ENCODE measurements at regions of chr2 and their contacts with region 1.

Region 1: DNA sequence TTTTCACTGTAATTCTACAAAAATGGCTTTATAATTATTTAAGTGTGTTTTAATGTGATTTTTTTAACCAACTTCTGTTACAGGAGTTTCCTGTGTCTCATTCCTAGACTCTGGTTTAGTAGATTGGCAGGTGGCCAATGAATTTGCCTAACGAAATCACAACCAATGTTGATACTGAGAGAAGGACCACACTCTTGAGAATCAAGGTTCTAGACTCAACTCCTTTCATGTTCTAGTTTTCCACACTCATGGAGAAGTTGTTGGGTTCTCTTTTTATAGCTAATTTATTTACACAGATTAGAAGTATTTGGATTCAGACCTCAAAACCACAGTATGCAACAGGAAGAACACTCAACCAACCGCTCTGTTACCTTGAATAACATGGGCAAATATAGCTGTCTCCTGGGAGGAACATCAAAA is 22.6 kb upstream of the USP34 start:
- DNase-seq: no peak
- H3K4me3 ChIP-seq: no peak overlapping the region
- H3K27ac ChIP-seq: no peak overlapping the region
- H3K4me1 ChIP-seq: no peaks in the 10 kb centered on the region
- H3K27me3 ChIP-seq: no peaks in the 10 kb centered on the region
- CTCF ChIP-seq: no peak
- EP300 ChIP-seq: no peak
- POLR2A ChIP-seq: no peak
- RAD21 ChIP-seq: no peak

Region 2: GRCh38 chr2:61478086-61478485 is 15.4 kb before region 1 on chr2:
- CTCF ChIA-PET with region 1: no interaction called
- POLR2A ChIA-PET with region 1: interaction called, 10 read pairs
- DNase-seq: no peak
- H3K4me3 ChIP-seq: no peak overlapping the region
- H3K27ac ChIP-seq: no peak overlapping the region
- H3K4me1 ChIP-seq: no peaks in the 10 kb centered on the region
- H3K27me3 ChIP-seq: no peaks in the 10 kb centered on the region
- CTCF ChIP-seq: no peak
- EP300 ChIP-seq: no peak
- POLR2A ChIP-seq: no peak
- RAD21 ChIP-seq: no peak

Region 3: GRCh38 chr2:61549546-61549945 is 56.0 kb after region 1 on chr2:
- CTCF ChIA-PET with region 1: no interaction called
- POLR2A ChIA-PET with region 1: no interaction called
- DNase-seq: no peak
- H3K4me3 ChIP-seq: no peak overlapping the region
- H3K27ac ChIP-seq: no peak overlapping the region; the same call in 1 of the 2 replicates
- H3K4me1 ChIP-seq: peaks cover 0 to 12% (median 6%) of the 10 kb centered on the region in 4 experiments; a peak in 4 of 7 replicates
- H3K27me3 ChIP-seq: no peaks in the 10 kb centered on the region
- CTCF ChIP-seq: no peak
- EP300 ChIP-seq: no peak
- POLR2A ChIP-seq: no peak
- RAD21 ChIP-seq: no peak

Region 4: DNA sequence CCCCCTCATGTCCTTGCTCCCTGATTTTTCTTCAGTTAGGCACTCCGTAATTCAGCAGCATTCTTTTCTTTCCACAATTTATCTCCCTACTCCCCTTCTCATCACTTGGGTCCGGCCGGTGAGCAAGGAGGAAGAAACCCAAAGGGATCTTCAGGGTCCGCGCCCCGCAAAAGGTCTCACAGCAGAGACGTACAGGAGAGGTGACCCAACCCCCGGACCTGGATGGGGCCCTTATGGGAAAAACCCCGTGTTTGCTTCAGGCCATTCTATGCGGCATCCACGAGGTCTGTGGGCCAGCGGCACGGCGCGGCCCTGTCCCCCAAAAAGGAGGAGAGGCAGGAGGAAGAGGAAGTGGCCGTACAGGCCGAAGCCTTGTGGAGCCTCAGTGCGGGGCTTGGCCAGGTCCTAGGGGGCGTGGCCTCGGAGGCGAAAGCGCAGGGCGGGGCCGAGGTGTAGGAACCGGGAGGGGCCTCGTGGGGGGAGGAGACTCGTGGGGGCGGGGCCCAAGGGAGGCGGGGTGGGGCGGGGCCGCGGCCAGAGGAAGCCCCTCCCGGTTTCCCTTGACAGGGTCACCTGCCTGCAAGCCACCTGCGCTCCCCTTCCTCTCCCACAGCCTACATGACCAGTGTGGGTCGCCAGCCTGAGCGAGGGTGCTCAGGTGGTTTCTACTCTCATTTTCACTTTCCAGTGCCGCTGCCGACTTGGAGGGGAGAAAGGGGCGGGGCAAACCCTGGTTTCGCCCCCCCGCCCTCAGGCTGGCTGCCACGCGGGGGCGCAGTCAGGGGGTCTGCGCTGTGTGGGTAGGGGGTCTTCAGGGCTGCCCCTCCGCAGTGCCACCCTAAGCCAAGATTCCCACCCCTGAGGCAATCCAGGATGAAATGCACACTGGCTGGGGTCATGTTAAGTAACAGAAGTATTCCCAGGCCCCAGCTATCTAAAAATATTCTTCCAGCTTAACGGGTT is 201.1 kb after region 1 on chr2:
- CTCF ChIA-PET with region 1: no interaction called
- POLR2A ChIA-PET with region 1: no interaction called
- DNase-seq: peak; percentile 81 to 98
- H3K4me3 ChIP-seq: peak overlapping the region; percentile 39 to 78 (median 66)
- H3K27ac ChIP-seq: no peak overlapping the region; the same call in 1 of the 2 replicates
- H3K4me1 ChIP-seq: no peaks in the 10 kb centered on the region; a peak in 1 of 7 replicates
- H3K27me3 ChIP-seq: no peaks in the 10 kb centered on the region
- CTCF ChIP-seq: peak; percentile 8 to 38 (median 28); a peak in 3 of 4 replicates
- EP300 ChIP-seq: no peak
- POLR2A ChIP-seq: peak; percentile 65 to 91
- RAD21 ChIP-seq: peak; percentile 0 to 14; a peak in 1 of 4 replicates

Measured in H1 (cell line).